Activated CD8-positive, alpha-beta T cell treated with anti-CD3 and anti-CD28 coated beads for 36 hours (primary cell): ENCODE measurements at regions of chr22 and their contacts with region 1.

Region 1: DNA sequence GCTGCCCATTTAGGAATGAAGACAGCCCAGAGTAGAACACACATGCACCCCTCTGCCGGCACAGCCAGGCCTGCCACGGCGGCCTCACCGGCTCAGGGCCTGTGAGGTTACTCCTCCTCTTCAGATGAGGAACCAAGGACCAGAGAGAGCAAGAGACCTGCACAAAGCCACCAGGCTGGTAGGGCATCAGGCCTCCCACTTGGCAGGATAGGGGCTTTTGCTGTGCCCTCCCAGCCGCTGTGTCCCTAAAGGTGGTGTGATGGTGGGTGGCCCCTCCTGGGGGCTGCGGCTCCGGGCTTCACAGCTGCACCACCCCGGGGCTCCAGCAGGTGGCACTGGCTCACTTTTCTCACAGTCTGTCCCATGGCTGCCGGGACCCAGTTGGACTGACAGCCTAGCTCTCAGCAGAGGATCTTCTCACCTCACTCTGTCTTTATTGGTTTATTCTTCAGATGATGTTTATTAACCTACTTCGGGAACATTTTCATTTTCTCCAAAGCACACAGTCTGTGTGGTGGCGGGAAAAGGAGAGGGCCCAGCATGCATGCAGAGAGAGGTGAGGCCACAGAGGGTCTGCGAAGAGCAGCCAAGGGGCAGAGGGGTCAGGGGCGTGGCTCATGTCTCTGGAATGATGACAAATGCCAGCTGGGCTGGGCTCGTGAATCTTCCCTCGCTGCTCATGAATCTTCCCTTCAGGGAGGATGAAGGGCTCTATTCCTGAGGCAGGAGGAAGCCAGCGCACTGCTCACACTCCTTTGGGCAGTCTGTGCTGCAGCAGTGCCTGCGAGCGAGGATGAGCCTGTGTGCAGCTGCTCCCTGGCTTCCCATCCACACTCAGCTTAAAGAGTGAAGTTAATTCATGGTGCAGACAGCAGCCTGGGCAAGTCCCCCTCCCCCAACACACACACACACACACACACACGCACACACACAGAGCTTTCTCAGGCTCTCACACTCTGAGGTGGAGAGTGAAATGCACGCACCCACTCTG is 101.1 kb upstream of the PITPNB start:
- DNase-seq: peak; percentile 80
- ATAC-seq: peak; percentile 93
- H3K4me3 Mint-ChIP-seq: no peak overlapping the region
- H3K27ac Mint-ChIP-seq: no peak overlapping the region
- H3K4me1 Mint-ChIP-seq: no peaks in the 10 kb centered on the region
- H3K27me3 Mint-ChIP-seq: no peaks in the 10 kb centered on the region
- CTCF ChIP-seq: peak; percentile 97

Region 2: DNA sequence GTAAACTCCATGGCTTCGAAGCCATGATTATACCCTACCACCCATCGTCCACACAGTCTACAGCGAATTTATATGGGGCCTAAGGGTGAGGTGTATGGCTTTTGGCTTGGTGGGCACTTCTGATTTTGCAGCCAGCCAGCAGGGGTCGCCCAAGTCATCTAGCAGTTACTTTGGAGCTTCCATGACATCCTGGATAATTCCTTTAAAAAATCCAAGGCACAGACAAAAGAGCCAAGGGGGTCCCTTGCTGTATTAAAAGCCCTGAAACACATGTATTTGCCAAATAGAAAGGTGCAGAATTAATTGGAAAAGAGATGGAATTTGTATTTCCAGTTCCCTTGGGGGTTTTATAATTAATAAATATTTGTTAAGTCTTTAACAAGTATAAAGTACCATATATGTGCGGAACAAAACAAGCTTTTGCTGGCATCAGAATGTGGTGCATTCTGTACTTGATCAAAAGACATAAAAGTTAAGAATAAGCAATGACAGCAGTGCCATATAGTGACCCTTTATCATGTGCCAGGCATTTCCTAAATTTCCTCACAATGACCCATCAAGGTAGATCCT is 31.7 kb after region 1 on chr22:
- CTCF ChIA-PET with region 1: interaction called, 10 read pairs
- POLR2A ChIA-PET with region 1: no interaction called
- intact Hi-C with region 1: no loop called
- DNase-seq: peak; percentile 57
- ATAC-seq: no peak
- H3K4me3 Mint-ChIP-seq: no peak overlapping the region
- H3K27ac Mint-ChIP-seq: no peak overlapping the region
- H3K4me1 Mint-ChIP-seq: no peaks in the 10 kb centered on the region
- H3K27me3 Mint-ChIP-seq: no peaks in the 10 kb centered on the region
- CTCF ChIP-seq: peak; percentile 71

Region 3: DNA sequence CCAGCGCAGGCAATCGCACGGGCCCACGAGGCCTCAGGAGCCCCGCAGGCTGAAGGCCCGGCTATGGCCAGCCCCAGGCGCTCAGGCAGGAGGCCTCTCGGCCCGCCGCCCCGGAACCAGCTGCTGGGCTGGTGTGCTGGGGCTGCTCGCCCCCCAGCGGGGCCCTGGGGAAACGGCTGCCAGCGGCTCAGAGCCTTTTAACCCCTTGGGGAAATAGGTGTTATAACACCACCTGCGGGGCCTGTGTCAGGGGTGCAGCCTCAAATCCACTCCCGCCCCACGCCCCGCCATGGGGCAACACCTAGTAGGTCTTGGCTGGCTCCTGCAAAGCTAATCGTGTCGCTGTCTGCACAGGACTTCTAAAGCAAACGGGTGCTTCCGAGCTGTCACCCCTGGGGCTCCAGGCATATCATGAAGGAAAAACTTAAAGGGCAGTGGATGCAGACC is 422.1 kb after region 1 on chr22:
- CTCF ChIA-PET with region 1: interaction called, 12 read pairs
- POLR2A ChIA-PET with region 1: no interaction called
- intact Hi-C with region 1: no loop called
- DNase-seq: peak; percentile 87
- ATAC-seq: peak; percentile 94
- H3K4me3 Mint-ChIP-seq: peak overlapping the region; percentile 77
- H3K27ac Mint-ChIP-seq: peak overlapping the region; percentile 76
- H3K4me1 Mint-ChIP-seq: peaks cover 25% of the 10 kb centered on the region
- H3K27me3 Mint-ChIP-seq: peaks cover 8% of the 10 kb centered on the region
- CTCF ChIP-seq: peak; percentile 83

Region 4: GRCh38 chr22:28594797-28595462 is 574.8 kb after region 1 on chr22:
- CTCF ChIA-PET with region 1: interaction called, 15 read pairs
- POLR2A ChIA-PET with region 1: no interaction called
- intact Hi-C with region 1: loop called (anchors 2 kb)
- DNase-seq: no peak
- ATAC-seq: peak; percentile 67
- H3K4me3 Mint-ChIP-seq: no peak overlapping the region
- H3K27ac Mint-ChIP-seq: no peak overlapping the region
- H3K4me1 Mint-ChIP-seq: no peaks in the 10 kb centered on the region
- H3K27me3 Mint-ChIP-seq: peaks cover 13% of the 10 kb centered on the region
- CTCF ChIP-seq: peak; percentile 79